Breast epithelium (tissue), 4 donors: ENCODE measurements at regions of chr11 and their contacts with region 1.

Region 1: GRCh38 chr11:92349486-92350156 is 125.0 kb downstream of the FAT3 start:
- DNase-seq: no peak
- H3K4me3 ChIP-seq: no peak overlapping the region
- H3K27ac ChIP-seq: no peak overlapping the region
- H3K4me1 ChIP-seq: no peaks in the 10 kb centered on the region
- H3K27me3 ChIP-seq: peaks cover 0 to 2% of the 10 kb centered on the region in 2 donors
- CTCF ChIP-seq: no peak
- POLR2A ChIP-seq: no peak

Region 2: GRCh38 chr11:92311616-92312449 is 37.8 kb before region 1 on chr11:
- intact Hi-C with region 1: no loop called
- DNase-seq: no peak
- H3K4me3 ChIP-seq: no peak overlapping the region
- H3K27ac ChIP-seq: no peak overlapping the region
- H3K4me1 ChIP-seq: peaks cover 0 to 5% of the 10 kb centered on the region in 2 donors
- H3K27me3 ChIP-seq: no peaks in the 10 kb centered on the region
- CTCF ChIP-seq: no peak
- POLR2A ChIP-seq: no peak

Region 3: DNA sequence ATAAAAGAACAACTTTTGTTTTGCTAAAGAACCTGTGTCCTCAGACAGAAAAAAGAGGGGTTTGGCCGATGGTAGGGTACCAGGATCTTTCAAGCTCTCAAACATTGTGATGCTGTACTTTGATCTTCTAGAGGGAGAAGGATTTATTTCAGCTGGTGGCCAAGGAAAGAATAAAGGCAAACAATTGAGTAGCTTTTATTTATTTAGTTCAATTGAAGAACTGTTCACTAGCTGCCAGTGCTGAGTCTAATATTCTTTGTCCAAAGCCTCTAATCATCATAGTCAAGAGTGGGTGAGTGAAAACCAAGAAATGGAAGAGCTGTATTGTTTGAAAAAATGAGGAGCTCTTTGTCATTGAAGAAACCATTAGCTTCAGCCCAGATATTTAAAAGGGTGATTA is 13.4 kb after region 1 on chr11:
- intact Hi-C with region 1: no loop called
- DNase-seq: no peak
- H3K4me3 ChIP-seq: no peak overlapping the region
- H3K27ac ChIP-seq: no peak overlapping the region
- H3K4me1 ChIP-seq: no peaks in the 10 kb centered on the region
- H3K27me3 ChIP-seq: no peaks in the 10 kb centered on the region
- CTCF ChIP-seq: no peak
- POLR2A ChIP-seq: no peak

Region 4: GRCh38 chr11:93392867-93393266 is 1043.2 kb after region 1 on chr11:
- intact Hi-C with region 1: loop called (anchors 5 kb)
- DNase-seq: no peak
- H3K4me3 ChIP-seq: no peak overlapping the region
- H3K27ac ChIP-seq: no peak overlapping the region
- H3K4me1 ChIP-seq: no peaks in the 10 kb centered on the region
- H3K27me3 ChIP-seq: no peaks in the 10 kb centered on the region
- CTCF ChIP-seq: no peak
- POLR2A ChIP-seq: no peak